Panc1 (cell line): ENCODE measurements at regions of chr3 and their contacts with region 1.

Region 1: DNA sequence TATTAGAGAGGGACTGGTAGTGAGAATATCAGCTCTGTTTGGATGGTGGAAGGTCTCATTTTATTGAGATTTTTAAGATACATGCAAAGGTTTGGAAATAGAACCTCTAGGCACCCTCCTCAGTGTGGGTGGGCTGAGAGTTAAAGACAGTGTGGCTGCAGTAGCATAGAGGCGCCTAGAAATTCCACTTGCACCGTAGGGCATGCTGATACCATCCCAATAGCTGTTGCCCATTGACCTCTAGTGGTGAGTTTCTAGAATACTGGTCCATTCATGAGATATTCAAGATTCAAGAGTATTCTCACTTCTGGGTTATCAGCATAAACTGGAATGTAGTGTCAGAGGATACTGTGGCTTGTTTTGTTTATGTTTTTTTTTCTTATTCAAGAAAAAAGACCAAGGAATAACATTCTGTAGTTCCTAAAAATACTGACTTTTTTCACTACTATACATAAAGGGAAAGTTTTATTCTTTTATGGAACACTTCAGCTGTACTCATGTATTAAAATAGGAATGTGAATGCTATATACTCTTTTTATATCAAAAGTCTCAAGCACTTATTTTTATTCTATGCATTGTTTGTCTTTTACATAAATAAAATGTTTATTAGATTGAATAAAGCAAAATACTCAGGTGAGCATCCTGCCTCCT is 87.2 kb downstream of the TGFBR2 start:
- DNase-seq: peak; percentile 57
- ATAC-seq: peak; percentile 86
- H3K4me3 ChIP-seq: no peak overlapping the region
- H3K27ac ChIP-seq: peak overlapping the region; percentile 63; the same call in 1 of the 2 replicates
- H3K4me1 ChIP-seq: peaks cover 30% of the 10 kb centered on the region
- H3K27me3 ChIP-seq: no peaks in the 10 kb centered on the region
- CTCF ChIP-seq: peak; percentile 80

Region 2: DNA sequence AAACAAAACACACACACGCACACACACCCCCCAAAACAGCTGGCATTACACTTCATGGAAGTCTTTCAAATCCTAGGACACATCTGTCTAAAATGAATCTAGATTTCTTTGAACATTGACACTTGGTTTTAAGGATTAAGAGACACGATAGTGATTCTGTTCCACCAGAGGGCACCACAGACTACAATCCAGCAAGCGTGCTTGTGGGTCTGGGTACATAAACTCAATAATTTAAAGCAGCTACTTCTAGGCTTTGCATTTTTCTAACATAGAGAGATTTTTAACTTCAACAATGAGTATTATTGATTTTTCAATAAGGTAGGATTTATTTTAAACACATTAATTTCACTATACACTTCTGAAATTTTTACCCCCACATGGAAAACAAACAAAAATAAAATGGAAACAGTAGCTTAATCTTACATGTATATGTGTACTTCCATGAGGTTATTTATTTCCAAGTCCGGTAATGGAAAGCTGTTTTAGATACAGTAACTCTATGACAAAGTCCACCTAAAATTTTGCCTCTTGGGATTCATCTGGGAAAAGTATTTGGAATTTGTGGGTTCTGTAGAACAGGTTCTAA is 651.2 kb before region 1 on chr3:
- CTCF ChIA-PET with region 1: no interaction called
- POLR2A ChIA-PET with region 1: no interaction called
- in situ Hi-C with region 1: no loop called
- intact Hi-C with region 1: loop called (anchors 2 kb)
- DNase-seq: peak; percentile 38
- ATAC-seq: peak; percentile 70; the same call in 1 of the 2 replicates
- H3K4me3 ChIP-seq: no peak overlapping the region
- H3K27ac ChIP-seq: no peak overlapping the region
- H3K4me1 ChIP-seq: no peaks in the 10 kb centered on the region; the same call in 1 of the 2 replicates
- H3K27me3 ChIP-seq: no peaks in the 10 kb centered on the region
- CTCF ChIP-seq: peak; percentile 65; the same call in 1 of the 2 replicates

Region 3: GRCh38 chr3:30112902-30113484 is 580.6 kb before region 1 on chr3:
- CTCF ChIA-PET with region 1: no interaction called
- POLR2A ChIA-PET with region 1: no interaction called
- in situ Hi-C with region 1: no loop called
- intact Hi-C with region 1: loop called (anchors 10 kb)
- DNase-seq: peak; percentile 10
- ATAC-seq: no peak
- H3K4me3 ChIP-seq: no peak overlapping the region
- H3K27ac ChIP-seq: peak overlapping the region; percentile 29; the same call in 1 of the 2 replicates
- H3K4me1 ChIP-seq: no peaks in the 10 kb centered on the region; the same call in 1 of the 2 replicates
- H3K27me3 ChIP-seq: no peaks in the 10 kb centered on the region
- CTCF ChIP-seq: peak; percentile 59; the same call in 1 of the 2 replicates

Region 4: GRCh38 chr3:30319713-30320112 is 373.9 kb before region 1 on chr3:
- CTCF ChIA-PET with region 1: interaction called, 10 read pairs
- POLR2A ChIA-PET with region 1: no interaction called
- in situ Hi-C with region 1: no loop called
- intact Hi-C with region 1: no loop called
- DNase-seq: no peak
- ATAC-seq: no peak
- H3K4me3 ChIP-seq: no peak overlapping the region
- H3K27ac ChIP-seq: peak overlapping the region; percentile 9; the same call in 1 of the 2 replicates
- H3K4me1 ChIP-seq: peaks cover 6% of the 10 kb centered on the region
- H3K27me3 ChIP-seq: no peaks in the 10 kb centered on the region
- CTCF ChIP-seq: peak; percentile 31; the same call in 1 of the 2 replicates

Region 5: DNA sequence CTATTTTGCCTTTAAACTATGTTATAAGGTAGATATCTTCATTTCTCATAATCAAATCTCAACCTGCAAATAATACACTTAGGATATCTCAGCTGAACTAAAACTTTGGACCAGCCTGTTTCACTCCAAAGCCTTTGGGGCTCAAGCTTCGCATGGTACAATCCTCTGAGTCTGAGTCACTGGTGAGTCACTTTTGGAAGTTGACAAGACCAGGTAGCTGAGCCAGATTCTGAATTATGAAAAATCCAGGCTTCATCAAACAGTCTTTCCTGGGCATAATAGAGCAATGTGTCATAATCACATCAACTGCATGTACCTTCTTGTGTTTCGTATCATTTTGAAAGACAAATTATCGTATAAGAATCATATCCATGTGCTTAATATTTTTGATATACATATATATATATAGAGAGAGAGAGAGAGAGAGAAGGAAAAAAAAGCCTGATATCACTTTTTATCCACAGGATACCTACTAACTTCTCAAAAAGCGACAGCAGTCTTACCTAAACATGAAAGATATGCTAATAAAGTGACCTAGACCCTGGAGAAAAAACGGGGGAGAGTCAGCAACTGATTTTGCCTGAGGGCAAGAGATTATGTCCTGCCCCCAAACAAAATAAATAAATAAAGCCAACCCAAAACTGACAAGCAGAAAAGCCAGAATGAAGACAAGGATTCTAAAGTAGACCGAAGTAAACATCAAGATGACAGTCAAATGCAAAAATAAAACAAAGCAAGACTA is 351.1 kb before region 1 on chr3:
- CTCF ChIA-PET with region 1: no interaction called
- POLR2A ChIA-PET with region 1: no interaction called
- in situ Hi-C with region 1: no loop called
- intact Hi-C with region 1: loop called (anchors 2 kb)
- DNase-seq: peak; percentile 77
- ATAC-seq: peak; percentile 98
- H3K4me3 ChIP-seq: no peak overlapping the region
- H3K27ac ChIP-seq: peak overlapping the region; percentile 85
- H3K4me1 ChIP-seq: peaks cover 21% of the 10 kb centered on the region
- H3K27me3 ChIP-seq: no peaks in the 10 kb centered on the region
- CTCF ChIP-seq: no peak

Region 6: DNA sequence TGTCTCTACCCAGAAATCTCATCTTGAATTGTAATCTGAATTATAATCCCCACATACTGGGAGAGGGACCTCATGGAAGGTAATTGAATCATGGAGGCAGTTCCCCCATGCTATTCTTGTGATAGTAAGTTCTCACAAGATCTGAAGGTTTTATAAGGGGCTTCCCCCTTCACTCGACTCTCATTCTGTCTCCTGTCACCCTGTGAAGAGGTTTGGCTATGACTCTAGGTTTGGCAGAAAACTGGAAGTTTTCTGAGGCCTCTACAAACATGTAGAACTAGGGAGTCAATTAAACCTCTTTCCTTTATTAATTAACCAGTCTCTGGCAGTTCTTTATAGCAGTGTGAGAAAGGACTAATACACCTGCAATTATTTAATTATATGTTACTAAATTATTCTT is 212.4 kb before region 1 on chr3:
- CTCF ChIA-PET with region 1: no interaction called
- POLR2A ChIA-PET with region 1: no interaction called
- in situ Hi-C with region 1: no loop called
- intact Hi-C with region 1: no loop called
- DNase-seq: no peak
- ATAC-seq: no peak
- H3K4me3 ChIP-seq: no peak overlapping the region
- H3K27ac ChIP-seq: no peak overlapping the region
- H3K4me1 ChIP-seq: peaks cover 7% of the 10 kb centered on the region; the same call in 1 of the 2 replicates
- H3K27me3 ChIP-seq: no peaks in the 10 kb centered on the region
- CTCF ChIP-seq: no peak

Region 7: GRCh38 chr3:30611613-30612436 is 81.8 kb before region 1 on chr3:
- CTCF ChIA-PET with region 1: no interaction called
- POLR2A ChIA-PET with region 1: interaction called, 4 read pairs
- in situ Hi-C with region 1: no loop called
- intact Hi-C with region 1: loop called (anchors 5 kb)
- DNase-seq: no peak
- ATAC-seq: 0 out of 2 replicates have a peak, but pooled peaks have one; percentile 39
- H3K4me3 ChIP-seq: no peak overlapping the region
- H3K27ac ChIP-seq: peak overlapping the region; percentile 68
- H3K4me1 ChIP-seq: peaks cover 54% of the 10 kb centered on the region
- H3K27me3 ChIP-seq: no peaks in the 10 kb centered on the region
- CTCF ChIP-seq: no peak